ENCODE measurements at regions of chr11 and their contacts with region 1.

Region 1: GRCh38 chr11:116787786-116788486 is at the start of gene ZPR1:
- DNase-seq: peak; percentile 72
- ATAC-seq: peak; percentile 66
- H3K4me3 Mint-ChIP-seq: peak within 1 kb of the TSS; percentile 94
- H3K27ac Mint-ChIP-seq: peak within 1 kb of the TSS; percentile 61
- H3K4me1 Mint-ChIP-seq: peaks cover 22% of the 10 kb centered on the region
- H3K27me3 Mint-ChIP-seq: peaks cover 23% of the 10 kb centered on the region
- CTCF ChIP-seq: no peak
- total RNA-seq, gene ZPR1: 55.2 to 59.6 TPM (median 56.6 TPM) in 3 replicates

Region 2: GRCh38 chr11:116644941-116645305 is 143.0 kb before region 1 on chr11:
- CTCF ChIA-PET with region 1: no interaction called
- POLR2A ChIA-PET with region 1: no interaction called
- DNase-seq: peak; percentile 51
- ATAC-seq: peak; percentile 82
- H3K4me3 Mint-ChIP-seq: no peak overlapping the region
- H3K27ac Mint-ChIP-seq: no peak overlapping the region
- H3K4me1 Mint-ChIP-seq: peaks cover 2% of the 10 kb centered on the region; the same call in 1 of the 2 replicates
- H3K27me3 Mint-ChIP-seq: no peaks in the 10 kb centered on the region; the same call in 1 of the 2 replicates
- CTCF ChIP-seq: no peak

Region 3: GRCh38 chr11:116732271-116733042 is 55.5 kb before region 1 on chr11:
- CTCF ChIA-PET with region 1: interaction called, 12 read pairs
- POLR2A ChIA-PET with region 1: no interaction called
- DNase-seq: peak; percentile 85
- ATAC-seq: peak; percentile 88
- H3K4me3 Mint-ChIP-seq: peak overlapping the region; percentile 64
- H3K27ac Mint-ChIP-seq: peak overlapping the region; percentile 50; the same call in 1 of the 2 replicates
- H3K4me1 Mint-ChIP-seq: peaks cover 36% of the 10 kb centered on the region
- H3K27me3 Mint-ChIP-seq: no peaks in the 10 kb centered on the region
- CTCF ChIP-seq: peak; percentile 85

Region 4: GRCh38 chr11:116772443-116773202 is 15.3 kb before region 1 on chr11 and contains the start of gene BUD13:
- CTCF ChIA-PET with region 1: interaction called, 13 read pairs
- POLR2A ChIA-PET with region 1: no interaction called
- DNase-seq: peak; percentile 91
- ATAC-seq: peak; percentile 92
- H3K4me3 Mint-ChIP-seq: peak within 1 kb of the TSS; percentile 95
- H3K27ac Mint-ChIP-seq: peak within 1 kb of the TSS; percentile 96
- H3K4me1 Mint-ChIP-seq: peaks cover 22% of the 10 kb centered on the region
- H3K27me3 Mint-ChIP-seq: no peaks in the 10 kb centered on the region
- CTCF ChIP-seq: no peak
- total RNA-seq, gene BUD13: 20.7 to 24.6 TPM (median 22.4 TPM) in 3 replicates

Region 5: GRCh38 chr11:116813781-116814471 is 26.0 kb after region 1 on chr11:
- CTCF ChIA-PET with region 1: interaction called, 21 read pairs
- POLR2A ChIA-PET with region 1: no interaction called
- DNase-seq: no peak
- ATAC-seq: no peak
- H3K4me3 Mint-ChIP-seq: no peak overlapping the region
- H3K27ac Mint-ChIP-seq: no peak overlapping the region
- H3K4me1 Mint-ChIP-seq: no peaks in the 10 kb centered on the region
- H3K27me3 Mint-ChIP-seq: no peaks in the 10 kb centered on the region
- CTCF ChIP-seq: no peak

Region 6: DNA sequence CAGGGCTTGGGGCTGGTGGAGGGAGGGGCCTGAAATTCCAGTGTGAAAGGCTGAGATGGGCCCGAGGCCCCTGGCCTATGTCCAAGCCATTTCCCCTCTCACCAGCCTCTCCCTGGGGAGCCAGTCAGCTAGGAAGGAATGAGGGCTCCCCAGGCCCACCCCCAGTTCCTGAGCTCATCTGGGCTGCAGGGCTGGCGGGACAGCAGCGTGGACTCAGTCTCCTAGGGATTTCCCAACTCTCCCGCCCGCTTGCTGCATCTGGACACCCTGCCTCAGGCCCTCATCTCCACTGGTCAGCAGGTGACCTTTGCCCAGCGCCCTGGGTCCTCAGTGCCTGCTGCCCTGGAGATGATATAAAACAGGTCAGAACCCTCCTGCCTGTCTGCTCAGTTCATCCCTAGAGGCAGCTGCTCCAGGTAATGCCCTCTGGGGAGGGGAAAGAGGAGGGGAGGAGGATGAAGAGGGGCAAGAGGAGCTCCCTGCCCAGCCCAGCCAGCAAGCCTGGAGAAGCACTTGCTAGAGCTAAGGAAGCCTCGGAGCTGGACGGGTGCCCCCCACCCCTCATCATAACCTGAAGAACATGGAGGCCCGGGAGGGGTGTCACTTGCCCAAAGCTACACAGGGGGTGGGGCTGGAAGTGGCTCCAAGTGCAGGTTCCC is 41.7 kb after region 1 on chr11 and contains the start of gene APOC3:
- CTCF ChIA-PET with region 1: interaction called, 358 read pairs
- POLR2A ChIA-PET with region 1: interaction called, 3 read pairs
- DNase-seq: no peak
- ATAC-seq: no peak
- H3K4me3 Mint-ChIP-seq: no peak within 1 kb of the TSS
- H3K27ac Mint-ChIP-seq: no peak within 1 kb of the TSS
- H3K4me1 Mint-ChIP-seq: peaks cover under 1% of the 10 kb centered on the region
- H3K27me3 Mint-ChIP-seq: peaks cover 1% of the 10 kb centered on the region
- CTCF ChIP-seq: no peak
- total RNA-seq, gene APOC3: 2.1 to 3.9 TPM (median 2.5 TPM) in 3 replicates

Region 7: DNA sequence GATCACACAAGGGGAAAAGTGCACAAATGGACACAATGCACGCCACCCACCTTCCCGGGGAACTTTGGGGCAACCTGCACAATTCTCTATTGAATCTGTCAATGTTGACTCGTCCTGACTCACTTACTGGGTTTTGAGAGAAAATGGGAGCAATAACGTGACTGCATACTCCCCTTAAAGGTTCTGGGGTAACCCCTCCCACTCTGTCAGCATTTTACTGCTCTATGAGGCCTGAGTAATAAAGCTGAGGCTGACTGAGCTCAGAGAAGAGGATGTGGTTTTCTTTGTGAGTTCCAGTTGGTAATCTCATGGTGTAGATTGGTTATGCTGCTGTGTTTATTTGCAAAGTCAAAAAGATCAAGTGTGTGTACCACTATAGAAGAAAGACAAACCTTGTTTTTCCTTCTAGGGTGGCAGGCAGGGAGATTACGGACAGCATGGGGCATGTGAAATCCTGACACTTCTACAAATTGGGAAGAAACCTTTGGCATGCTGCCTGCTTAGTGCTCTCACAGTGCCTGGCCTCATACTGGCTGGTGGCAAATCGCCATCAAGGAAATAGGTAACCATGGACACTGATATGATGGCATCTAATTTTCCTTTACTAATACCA is 65.6 kb after region 1 on chr11:
- CTCF ChIA-PET with region 1: interaction called, 10 read pairs
- POLR2A ChIA-PET with region 1: no interaction called
- DNase-seq: no peak
- ATAC-seq: no peak
- H3K4me3 Mint-ChIP-seq: no peak overlapping the region
- H3K27ac Mint-ChIP-seq: no peak overlapping the region
- H3K4me1 Mint-ChIP-seq: no peaks in the 10 kb centered on the region
- H3K27me3 Mint-ChIP-seq: no peaks in the 10 kb centered on the region; the same call in 1 of the 2 replicates
- CTCF ChIP-seq: no peak

Region 8: GRCh38 chr11:117083011-117083935 is 295.3 kb after region 1 on chr11:
- CTCF ChIA-PET with region 1: no interaction called
- POLR2A ChIA-PET with region 1: no interaction called
- DNase-seq: no peak
- ATAC-seq: peak; percentile 39; the same call in 1 of the 2 replicates
- H3K4me3 Mint-ChIP-seq: no peak overlapping the region
- H3K27ac Mint-ChIP-seq: peak overlapping the region; percentile 57
- H3K4me1 Mint-ChIP-seq: peaks cover 34% of the 10 kb centered on the region
- H3K27me3 Mint-ChIP-seq: no peaks in the 10 kb centered on the region
- CTCF ChIP-seq: no peak

Region 9: DNA sequence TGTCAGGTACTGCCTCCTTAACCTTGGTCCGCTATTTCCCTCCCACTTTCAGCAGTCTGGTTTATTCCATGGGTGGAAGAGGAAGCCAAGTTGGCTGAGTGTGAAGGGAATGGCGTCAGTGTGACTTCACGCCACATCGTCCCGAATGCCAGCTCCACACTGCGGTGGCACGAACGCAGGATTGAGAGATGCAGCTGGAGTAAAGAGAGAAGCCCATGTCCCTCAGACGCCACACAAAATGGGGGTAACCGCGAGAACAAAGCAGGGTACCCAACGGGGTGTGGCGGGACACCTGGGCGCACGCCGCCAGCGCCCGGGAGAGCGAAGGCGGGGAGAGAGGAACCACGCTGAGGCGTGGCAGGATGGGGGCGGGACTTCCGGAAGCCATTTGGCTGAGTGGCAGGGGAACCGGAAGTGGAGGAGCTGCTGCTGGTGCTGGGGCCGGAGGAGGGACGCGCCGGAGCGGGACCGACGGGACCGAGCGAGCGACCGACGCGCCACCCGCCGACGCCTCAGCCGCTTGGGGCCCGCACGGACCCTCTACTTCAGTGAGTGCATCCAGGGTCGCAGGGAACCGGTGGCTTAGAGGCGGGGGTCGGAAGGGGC is 356.0 kb after region 1 on chr11 and contains the start of gene PAFAH1B2:
- CTCF ChIA-PET with region 1: interaction called, 23 read pairs
- POLR2A ChIA-PET with region 1: no interaction called
- DNase-seq: peak; percentile 95
- ATAC-seq: peak; percentile 87
- H3K4me3 Mint-ChIP-seq: peak within 1 kb of the TSS; percentile 98
- H3K27ac Mint-ChIP-seq: peak within 1 kb of the TSS; percentile 96
- H3K4me1 Mint-ChIP-seq: peaks cover 33% of the 10 kb centered on the region
- H3K27me3 Mint-ChIP-seq: peaks cover 3% of the 10 kb centered on the region; the same call in 1 of the 2 replicates
- CTCF ChIP-seq: no peak
- total RNA-seq, gene PAFAH1B2: 132 to 138 TPM (median 133 TPM) in 3 replicates